ENCODE measurements at regions of chrX and their contacts with region 1.

Region 1: GRCh38 chrX:19904778-19905367 is 17.5 kb upstream of the SH3KBP1 start:
- DNase-seq: peak; percentile 15
- H3K4me3 Mint-ChIP-seq: no peak overlapping the region
- H3K27ac Mint-ChIP-seq: no peak overlapping the region
- H3K4me1 Mint-ChIP-seq: peaks cover 15% of the 10 kb centered on the region
- H3K27me3 Mint-ChIP-seq: no peaks in the 10 kb centered on the region

Region 2: DNA sequence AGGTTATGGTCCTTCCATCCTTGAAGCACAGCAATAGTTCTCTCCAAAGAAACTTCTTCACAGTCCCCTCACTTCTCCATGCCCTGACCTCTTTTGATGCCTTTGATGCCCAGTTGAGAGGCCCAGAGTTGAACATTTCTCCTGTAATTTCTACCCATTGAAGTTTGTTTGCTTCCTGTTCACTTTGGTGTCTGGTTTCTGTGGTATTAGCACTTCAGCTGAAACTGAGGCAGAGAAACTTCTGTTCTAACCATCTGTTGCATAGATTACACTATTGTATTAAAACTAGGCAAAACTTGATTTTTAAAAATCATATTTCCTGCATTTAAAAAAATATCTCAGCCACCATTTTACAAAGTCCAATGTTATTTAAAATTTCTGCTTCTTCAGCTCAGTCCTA is 692.8 kb before region 1 on chrX:
- CTCF ChIA-PET with region 1: no interaction called
- POLR2A ChIA-PET with region 1: no interaction called
- intact Hi-C with region 1: no loop called
- DNase-seq: no peak
- H3K4me3 Mint-ChIP-seq: no peak overlapping the region
- H3K27ac Mint-ChIP-seq: no peak overlapping the region
- H3K4me1 Mint-ChIP-seq: no peaks in the 10 kb centered on the region
- H3K27me3 Mint-ChIP-seq: peaks cover 1% of the 10 kb centered on the region

Region 3: GRCh38 chrX:19924285-19924684 is 19.4 kb after region 1 on chrX:
- CTCF ChIA-PET with region 1: no interaction called
- POLR2A ChIA-PET with region 1: no interaction called
- intact Hi-C with region 1: no loop called
- DNase-seq: no peak
- H3K4me3 Mint-ChIP-seq: no peak overlapping the region
- H3K27ac Mint-ChIP-seq: no peak overlapping the region
- H3K4me1 Mint-ChIP-seq: no peaks in the 10 kb centered on the region
- H3K27me3 Mint-ChIP-seq: no peaks in the 10 kb centered on the region

Region 4: GRCh38 chrX:19964017-19964710 is 59.3 kb after region 1 on chrX:
- CTCF ChIA-PET with region 1: interaction called, 4 read pairs
- POLR2A ChIA-PET with region 1: no interaction called
- intact Hi-C with region 1: loop called (anchors 2 kb)
- DNase-seq: peak; percentile 65
- H3K4me3 Mint-ChIP-seq: no peak overlapping the region
- H3K27ac Mint-ChIP-seq: no peak overlapping the region
- H3K4me1 Mint-ChIP-seq: peaks cover 18% of the 10 kb centered on the region
- H3K27me3 Mint-ChIP-seq: no peaks in the 10 kb centered on the region

Region 5: GRCh38 chrX:20056704-20057103 is 151.8 kb after region 1 on chrX:
- CTCF ChIA-PET with region 1: no interaction called
- POLR2A ChIA-PET with region 1: no interaction called
- intact Hi-C with region 1: no loop called
- DNase-seq: no peak
- H3K4me3 Mint-ChIP-seq: no peak overlapping the region
- H3K27ac Mint-ChIP-seq: no peak overlapping the region
- H3K4me1 Mint-ChIP-seq: peaks cover 2% of the 10 kb centered on the region
- H3K27me3 Mint-ChIP-seq: no peaks in the 10 kb centered on the region

Region 6: DNA sequence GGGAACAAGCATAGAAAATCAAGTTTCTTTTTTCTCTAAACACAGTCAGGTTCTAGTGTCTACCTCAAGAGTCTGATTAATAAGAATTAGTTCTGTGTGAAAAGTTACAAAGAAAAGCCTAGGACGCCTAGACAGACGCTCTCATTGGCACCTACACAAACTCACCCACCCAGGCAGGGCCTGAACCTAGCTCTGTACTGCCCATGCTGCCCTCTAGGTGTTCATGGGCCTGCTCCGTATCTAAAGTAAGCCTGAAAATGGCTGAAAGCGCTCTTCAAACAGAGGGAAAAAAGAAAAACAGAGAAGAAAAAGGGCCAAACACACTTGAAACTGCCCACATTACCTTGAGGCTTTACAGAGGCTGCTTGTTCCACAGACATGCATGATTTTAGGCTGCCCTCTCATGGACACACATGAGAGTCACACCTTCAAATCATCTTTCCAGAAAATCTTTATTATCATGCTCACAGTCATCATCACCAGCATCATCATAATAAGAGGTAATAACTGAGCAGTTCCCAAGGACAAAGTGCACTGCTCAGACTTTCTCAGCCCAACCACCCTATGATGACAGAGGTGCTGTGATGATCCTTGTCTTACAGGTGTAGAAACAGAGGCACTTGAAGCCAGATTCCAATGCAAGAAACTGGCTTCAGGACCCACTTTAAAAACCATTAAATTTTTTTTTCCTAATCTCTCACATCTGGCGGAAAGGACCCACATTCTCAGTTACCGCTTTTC is 162.3 kb after region 1 on chrX:
- CTCF ChIA-PET with region 1: interaction called, 26 read pairs
- POLR2A ChIA-PET with region 1: no interaction called
- intact Hi-C with region 1: loop called (anchors 1 kb)
- DNase-seq: peak; percentile 13
- H3K4me3 Mint-ChIP-seq: no peak overlapping the region
- H3K27ac Mint-ChIP-seq: no peak overlapping the region
- H3K4me1 Mint-ChIP-seq: no peaks in the 10 kb centered on the region
- H3K27me3 Mint-ChIP-seq: no peaks in the 10 kb centered on the region

Region 7: DNA sequence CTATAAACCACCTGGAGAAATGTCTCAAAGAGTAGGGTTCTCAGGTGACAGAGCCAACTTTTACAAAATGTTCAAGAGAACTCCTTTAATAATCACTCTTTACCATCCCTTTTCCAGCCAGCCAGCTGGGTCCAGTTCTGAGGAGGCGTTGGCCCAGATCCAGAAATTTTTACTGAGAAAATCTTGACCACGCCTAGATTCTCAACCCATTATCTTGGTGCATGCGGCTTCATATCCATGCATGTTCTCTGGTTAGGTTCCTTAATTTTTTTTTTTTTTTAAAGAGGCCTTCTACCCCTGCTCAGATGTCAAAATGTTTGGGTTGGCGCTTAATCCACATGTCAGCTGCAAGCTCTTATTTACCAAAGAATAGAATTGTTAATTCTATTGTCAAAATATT is 223.8 kb after region 1 on chrX:
- CTCF ChIA-PET with region 1: interaction called, 4 read pairs
- POLR2A ChIA-PET with region 1: no interaction called
- intact Hi-C with region 1: loop called (anchors 10 kb)
- DNase-seq: no peak
- H3K4me3 Mint-ChIP-seq: no peak overlapping the region
- H3K27ac Mint-ChIP-seq: no peak overlapping the region
- H3K4me1 Mint-ChIP-seq: no peaks in the 10 kb centered on the region
- H3K27me3 Mint-ChIP-seq: no peaks in the 10 kb centered on the region

Measured in activated CD4-positive, alpha-beta memory T cell treated with anti-CD3 and anti-CD28 coated beads for 36 hours (primary cell).